ENCODE measurements at regions of chr11 and their contacts with region 1.

Region 1: GRCh38 chr11:76339221-76339620 is 41.7 kb downstream of the THAP12 start:
- DNase-seq: no peak
- H3K4me3 ChIP-seq: no peak overlapping the region
- H3K27ac ChIP-seq: peak overlapping the region; percentile 22 to 57
- H3K4me1 ChIP-seq: no peaks in the 10 kb centered on the region
- H3K27me3 ChIP-seq: no peaks in the 10 kb centered on the region
- CTCF ChIP-seq: no peak
- POLR2A ChIP-seq: no peak

Region 2: GRCh38 chr11:76277298-76278175 is 61.7 kb before region 1 on chr11:
- intact Hi-C with region 1: loop called (anchors 2 kb)
- DNase-seq: no peak
- H3K4me3 ChIP-seq: no peak overlapping the region
- H3K27ac ChIP-seq: no peak overlapping the region
- H3K4me1 ChIP-seq: no peaks in the 10 kb centered on the region
- H3K27me3 ChIP-seq: no peaks in the 10 kb centered on the region
- CTCF ChIP-seq: no peak
- POLR2A ChIP-seq: no peak

Region 3: GRCh38 chr11:76293189-76293631 is 46.0 kb before region 1 on chr11:
- intact Hi-C with region 1: no loop called
- DNase-seq: no peak
- H3K4me3 ChIP-seq: no peak overlapping the region
- H3K27ac ChIP-seq: no peak overlapping the region
- H3K4me1 ChIP-seq: no peaks in the 10 kb centered on the region
- H3K27me3 ChIP-seq: no peaks in the 10 kb centered on the region
- CTCF ChIP-seq: no peak
- POLR2A ChIP-seq: no peak